Sigmoid colon (tissue), 7 donors: ENCODE measurements at regions of chr14 and their contacts with region 1.

Region 1: DNA sequence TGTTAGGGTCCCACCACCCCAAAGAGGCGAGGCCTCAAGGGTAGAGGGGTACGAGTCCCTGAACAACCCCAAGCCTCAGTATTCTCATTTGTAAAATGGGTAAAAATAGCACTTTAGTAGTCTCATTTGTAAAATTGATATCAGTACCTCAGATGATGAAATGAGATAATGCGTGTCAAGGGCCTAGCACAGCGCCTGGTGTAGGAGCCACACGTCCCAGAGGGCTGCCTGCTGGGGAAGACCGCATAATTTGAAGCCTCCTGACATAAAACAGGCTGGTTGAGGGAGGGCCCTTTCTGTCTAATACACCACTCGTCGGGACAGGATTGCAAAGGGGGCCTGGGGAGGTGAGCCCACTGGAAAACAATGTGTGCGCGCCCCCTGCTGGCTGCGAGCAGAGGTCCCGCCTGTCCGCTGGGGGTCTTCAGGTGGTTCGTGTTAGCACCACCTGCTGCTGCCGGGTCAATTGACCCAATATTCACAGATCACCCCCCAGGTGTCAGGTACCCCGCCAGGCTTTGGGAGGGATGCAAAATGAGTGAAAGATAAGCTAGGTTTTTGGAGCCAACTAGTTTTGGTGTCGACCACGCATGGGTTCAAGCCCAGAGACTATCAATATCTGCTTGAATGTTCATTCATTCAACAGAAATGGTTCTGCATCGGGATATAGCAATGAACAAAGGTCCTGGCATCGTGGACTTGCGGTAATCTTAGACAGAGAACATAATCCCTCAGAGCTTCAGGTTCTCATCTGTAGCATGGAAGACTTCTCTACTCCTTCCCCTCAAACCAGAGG is 24.7 kb upstream of the IRF2BPL start:
- DNase-seq: peak; percentile 88
- H3K4me3 ChIP-seq: no peak overlapping the region
- H3K27ac ChIP-seq: peak overlapping the region; percentile 48 to 86 (median 84)
- H3K4me1 ChIP-seq: peaks cover 0 to 29% (median 25%) of the 10 kb centered on the region in 4 donors
- H3K27me3 ChIP-seq: no peaks in the 10 kb centered on the region
- CTCF ChIP-seq: peak; percentile 92 to 97 (median 96)
- EP300 ChIP-seq: peak in 1 of 4 donors; percentile 15
- POLR2A ChIP-seq: no peak

Region 2: GRCh38 chr14:76947078-76947837 is 106.0 kb before region 1 on chr14:
- intact Hi-C with region 1: loop called (anchors 2 kb)
- DNase-seq: peak; percentile 95
- H3K4me3 ChIP-seq: peak overlapping the region in 2 of 4 donors; percentile 18 to 20
- H3K27ac ChIP-seq: peak overlapping the region; percentile 76 to 97 (median 78)
- H3K4me1 ChIP-seq: peaks cover 3 to 46% (median 37%) of the 10 kb centered on the region in 4 donors
- H3K27me3 ChIP-seq: no peaks in the 10 kb centered on the region
- CTCF ChIP-seq: peak; percentile 36 to 51 (median 42)
- EP300 ChIP-seq: no peak
- POLR2A ChIP-seq: no peak

Region 3: DNA sequence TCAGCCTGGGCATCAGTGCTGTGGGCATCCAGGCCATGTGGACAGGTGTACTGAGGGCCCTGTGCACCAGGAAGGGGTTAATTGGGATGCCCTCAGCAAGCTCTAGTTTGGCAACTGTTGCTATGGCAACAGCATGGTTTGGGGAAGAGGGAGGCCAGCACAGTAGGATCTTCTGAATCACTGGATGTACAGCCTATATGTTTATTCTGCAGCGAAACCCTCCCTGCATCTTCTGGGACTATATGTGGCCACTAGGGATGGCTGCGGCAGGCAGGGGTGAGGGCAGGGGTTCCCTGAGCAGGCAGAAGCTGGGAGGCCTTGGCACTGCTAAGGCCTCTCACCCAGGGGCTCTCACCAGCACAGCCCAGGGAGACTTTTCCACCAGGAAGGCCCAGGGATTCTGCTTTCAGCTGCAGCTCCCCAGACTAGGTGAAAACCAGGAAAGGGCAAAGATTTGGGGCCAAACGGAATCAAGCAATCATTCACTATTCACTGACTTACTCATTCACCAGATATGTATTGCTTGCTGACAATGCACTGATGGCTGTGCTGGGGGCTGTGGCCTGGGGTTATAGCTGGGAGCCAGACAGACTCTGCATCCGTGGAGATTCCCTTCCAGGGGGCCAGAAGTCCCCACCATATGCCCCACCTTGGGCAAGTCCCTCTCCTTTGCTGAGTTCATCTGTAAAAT is 67.6 kb before region 1 on chr14:
- intact Hi-C with region 1: no loop called
- DNase-seq: no peak
- H3K4me3 ChIP-seq: no peak overlapping the region
- H3K27ac ChIP-seq: no peak overlapping the region
- H3K4me1 ChIP-seq: no peaks in the 10 kb centered on the region
- H3K27me3 ChIP-seq: no peaks in the 10 kb centered on the region
- CTCF ChIP-seq: no peak
- EP300 ChIP-seq: no peak
- POLR2A ChIP-seq: no peak

Region 4: GRCh38 chr14:77018832-77019231 is 34.4 kb before region 1 on chr14:
- intact Hi-C with region 1: loop called (anchors 5 kb)
- DNase-seq: no peak
- H3K4me3 ChIP-seq: no peak overlapping the region
- H3K27ac ChIP-seq: no peak overlapping the region
- H3K4me1 ChIP-seq: peaks cover 0 to 30% (median 29%) of the 10 kb centered on the region in 4 donors
- H3K27me3 ChIP-seq: no peaks in the 10 kb centered on the region
- CTCF ChIP-seq: no peak
- EP300 ChIP-seq: no peak
- POLR2A ChIP-seq: no peak

Region 5: DNA sequence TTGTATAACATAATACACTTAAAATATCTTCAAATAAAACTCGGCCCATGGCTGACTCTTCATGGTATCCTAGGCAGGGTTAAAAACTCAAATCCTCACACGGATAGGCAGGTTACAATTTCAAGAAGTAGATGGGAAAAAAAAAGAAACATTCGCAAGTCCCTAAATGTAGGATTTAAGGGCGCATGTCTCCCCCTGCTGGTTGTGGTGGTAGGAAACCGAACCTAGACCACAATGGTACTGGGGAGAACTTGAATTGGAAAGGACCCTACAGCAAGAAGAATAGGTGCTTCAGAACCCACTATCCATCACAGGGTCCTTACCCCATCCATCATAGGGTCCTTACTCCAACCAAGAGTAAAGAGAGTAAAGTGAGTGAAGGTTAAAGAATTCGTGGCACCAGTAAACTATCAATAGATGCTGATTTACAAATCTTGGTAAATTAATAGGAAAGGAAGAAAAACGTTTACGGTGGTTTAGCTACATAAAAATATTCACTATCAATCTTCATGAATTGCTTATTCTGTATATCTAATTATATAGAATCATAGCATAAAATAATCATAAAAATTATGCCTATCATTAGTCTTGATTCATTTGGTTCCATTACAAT is 41.5 kb after region 1 on chr14:
- intact Hi-C with region 1: no loop called
- DNase-seq: peak; percentile 84
- H3K4me3 ChIP-seq: no peak overlapping the region
- H3K27ac ChIP-seq: peak overlapping the region in 1 of 4 donors; percentile 7
- H3K4me1 ChIP-seq: peaks cover 0 to 25% (median 19%) of the 10 kb centered on the region in 4 donors
- H3K27me3 ChIP-seq: no peaks in the 10 kb centered on the region
- CTCF ChIP-seq: peak; percentile 60 to 77 (median 65)
- EP300 ChIP-seq: no peak
- POLR2A ChIP-seq: no peak